ENCODE measurements at regions of chr1 and their contacts with region 1.

Region 1: GRCh38 chr1:12208764-12209494 is 20.9 kb upstream of the VPS13D start:
- DNase-seq: peak; percentile 88 to 90
- ATAC-seq: peak; percentile 91 to 97 (median 93)
- H3K4me3 ChIP-seq: no peak overlapping the region
- H3K27ac ChIP-seq: no peak overlapping the region
- H3K4me1 ChIP-seq: no peaks in the 10 kb centered on the region
- H3K27me3 ChIP-seq: no peaks in the 10 kb centered on the region
- CTCF ChIP-seq: peak; percentile 95

Region 2: DNA sequence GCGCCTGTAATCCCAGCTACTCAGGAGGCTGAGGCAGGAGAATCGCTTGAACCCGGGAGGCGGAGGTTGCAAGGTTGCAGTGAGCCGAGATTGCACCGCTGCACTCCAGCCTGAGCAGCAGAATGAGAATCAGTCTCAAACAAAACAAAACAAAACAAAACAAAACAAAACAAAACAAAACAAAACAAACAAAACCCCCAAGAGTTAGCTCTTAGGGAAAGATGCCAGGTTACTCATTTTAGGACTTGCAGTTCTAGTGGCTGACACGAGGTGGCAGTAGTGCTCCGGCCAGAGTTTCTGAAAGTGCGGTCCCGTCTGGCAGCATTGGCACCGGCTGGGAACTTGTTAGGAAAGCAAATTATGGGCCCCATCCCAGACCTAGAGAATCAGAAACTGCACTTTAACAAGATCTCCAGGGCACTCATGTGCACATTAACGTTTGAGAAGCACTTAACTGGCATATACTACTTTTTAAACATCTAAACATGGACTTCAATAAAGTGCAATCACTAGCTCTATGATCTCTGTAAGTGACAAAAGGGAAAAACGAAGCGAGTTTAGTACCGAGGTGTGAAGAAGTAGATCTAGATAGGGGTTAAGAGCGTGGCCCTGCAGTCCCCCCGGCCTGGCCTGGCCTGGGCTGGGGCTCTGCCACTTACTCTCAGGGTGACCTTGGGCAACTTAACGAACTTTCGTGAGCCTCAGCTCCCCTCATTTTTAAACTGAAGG is 84.1 kb before region 1 on chr1:
- intact Hi-C with region 1: loop called (anchors 1 to 2 kb)
- DNase-seq: peak; percentile 79 to 88
- ATAC-seq: peak; percentile 67 to 92 (median 83)
- H3K4me3 ChIP-seq: no peak overlapping the region
- H3K27ac ChIP-seq: peak overlapping the region; percentile 12
- H3K4me1 ChIP-seq: no peaks in the 10 kb centered on the region
- H3K27me3 ChIP-seq: no peaks in the 10 kb centered on the region
- CTCF ChIP-seq: peak; percentile 97

Region 3: GRCh38 chr1:12229386-12229834 is 20.5 kb after region 1 on chr1:
- intact Hi-C with region 1: no loop called
- DNase-seq: no peak
- ATAC-seq: peak in 1 of 4 donors; percentile 1
- H3K4me3 ChIP-seq: peak overlapping the region; percentile 98
- H3K27ac ChIP-seq: peak overlapping the region; percentile 96
- H3K4me1 ChIP-seq: peaks cover 13% of the 10 kb centered on the region
- H3K27me3 ChIP-seq: no peaks in the 10 kb centered on the region
- CTCF ChIP-seq: no peak

Region 4: DNA sequence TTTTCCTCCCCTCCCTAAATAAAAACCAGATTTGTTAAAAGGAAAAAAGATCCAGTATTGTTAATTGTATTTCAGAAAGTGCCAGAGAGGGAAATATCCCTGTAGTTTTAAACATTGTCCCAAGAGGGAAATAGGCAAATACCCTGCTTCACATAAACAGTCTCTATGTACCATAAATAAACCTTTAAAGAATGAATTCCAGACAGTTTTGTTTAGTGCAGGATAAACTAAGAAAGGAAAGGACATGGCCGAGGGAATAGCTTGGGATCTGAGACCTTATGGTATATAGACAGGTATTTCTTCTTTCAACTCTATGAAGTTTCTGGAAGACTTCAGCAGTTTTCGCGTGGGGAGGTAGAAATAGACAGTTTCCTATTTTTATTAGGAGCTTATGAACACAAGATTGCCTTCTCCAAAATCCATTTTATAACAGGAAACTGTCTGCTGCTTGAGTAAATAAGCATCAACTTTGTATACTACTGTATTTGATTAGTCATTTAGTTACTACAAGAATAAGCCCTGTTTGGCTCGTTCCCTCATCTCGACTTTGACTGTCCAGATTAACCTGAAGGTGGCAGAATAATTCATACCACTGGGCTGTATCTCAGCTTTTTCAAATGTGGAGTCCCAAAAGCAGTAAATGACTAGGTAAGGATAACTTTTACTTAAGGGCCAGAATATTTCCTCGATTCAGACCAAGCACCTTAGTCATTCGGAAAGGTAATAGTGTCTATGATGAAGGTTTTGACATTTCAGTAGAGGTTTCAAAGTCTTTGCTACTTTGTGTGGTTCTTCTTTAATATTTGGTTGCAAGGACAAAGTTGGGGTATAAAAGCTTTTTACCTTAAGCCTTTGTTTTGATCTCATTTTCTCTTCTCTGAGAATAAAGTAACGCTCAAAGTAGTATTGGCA is 198.4 kb after region 1 on chr1:
- intact Hi-C with region 1: no loop called
- DNase-seq: no peak
- ATAC-seq: peak; percentile 69 to 93 (median 86)
- H3K4me3 ChIP-seq: no peak overlapping the region
- H3K27ac ChIP-seq: peak overlapping the region; percentile 66
- H3K4me1 ChIP-seq: peaks cover 48% of the 10 kb centered on the region
- H3K27me3 ChIP-seq: no peaks in the 10 kb centered on the region
- CTCF ChIP-seq: peak; percentile 56

Measured in psoas muscle (tissue), 8 donors.